ENCODE measurements at regions of chr3 and their contacts with region 1.

Region 1: GRCh38 chr3:11568503-11569155 is 75.1 kb downstream of the VGLL4 start:
- DNase-seq: peak; percentile 97
- H3K4me3 ChIP-seq: peak overlapping the region in 2 of 3 experiments; percentile 3 to 10
- H3K27ac ChIP-seq: peak overlapping the region; percentile 97
- H3K4me1 ChIP-seq: peaks cover 53% of the 10 kb centered on the region
- H3K27me3 ChIP-seq: no peaks in the 10 kb centered on the region
- CTCF ChIP-seq: no peak
- POLR2A ChIP-seq: peak; percentile 74

Region 2: GRCh38 chr3:10992017-10992941 is 576.4 kb before region 1 on chr3 and contains the start of gene SLC6A1:
- CTCF ChIA-PET with region 1: no interaction called
- POLR2A ChIA-PET with region 1: no interaction called
- dilution Hi-C with region 1: no loop called
- intact Hi-C with region 1: no loop called
- DNase-seq: no peak
- H3K4me3 ChIP-seq: no peak within 1 kb of the TSS
- H3K27ac ChIP-seq: no peak within 1 kb of the TSS
- H3K4me1 ChIP-seq: no peaks in the 10 kb centered on the region
- H3K27me3 ChIP-seq: peaks cover 34 to 45% of the 10 kb centered on the region in 2 experiments
- CTCF ChIP-seq: no peak
- POLR2A ChIP-seq: no peak
- total RNA-seq, gene SLC6A1: not detected in 2 replicates

Region 3: DNA sequence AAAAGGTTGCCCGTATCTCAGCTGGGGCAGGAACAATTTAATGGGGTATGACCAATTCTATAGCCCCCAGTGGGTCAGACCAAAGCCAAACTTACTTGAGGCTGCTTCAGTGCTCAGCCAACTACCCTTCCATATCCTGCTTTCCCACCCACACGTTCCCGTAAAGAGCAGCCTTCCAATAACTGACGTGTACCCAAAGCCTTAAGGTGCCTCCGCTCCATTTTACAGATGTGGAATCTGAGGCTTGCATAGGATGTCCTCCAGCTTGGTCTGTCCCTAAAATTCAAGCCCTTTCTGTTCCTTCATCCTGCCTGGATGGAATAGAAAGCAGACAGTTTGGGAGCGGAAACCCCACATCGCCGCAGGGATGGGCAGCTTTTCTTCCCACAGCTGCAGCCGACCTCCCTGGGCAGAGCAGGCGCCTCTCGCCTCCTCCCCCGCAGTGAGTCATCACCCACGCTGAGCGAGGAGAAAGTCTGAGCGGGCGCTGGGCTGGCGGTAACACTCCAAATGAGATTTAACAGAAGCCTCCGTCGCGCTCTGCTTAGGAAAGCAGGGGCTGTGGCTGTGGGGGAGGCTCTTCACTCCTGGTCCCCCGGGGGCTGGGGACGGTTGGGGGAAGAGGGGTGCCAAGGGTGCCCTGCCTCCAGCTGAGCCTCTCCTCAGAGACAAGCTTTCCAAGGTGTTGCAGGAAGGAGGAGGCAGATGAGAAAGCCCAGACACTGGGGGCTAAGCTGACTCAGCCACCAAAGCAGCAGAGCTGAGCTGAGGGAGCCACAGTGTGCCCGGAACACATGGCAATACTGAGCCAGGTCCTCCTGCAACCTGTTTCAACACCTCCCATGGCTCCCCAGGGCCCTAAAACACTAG is 472.1 kb before region 1 on chr3:
- CTCF ChIA-PET with region 1: no interaction called
- POLR2A ChIA-PET with region 1: no interaction called
- dilution Hi-C with region 1: no loop called
- intact Hi-C with region 1: no loop called
- DNase-seq: peak; percentile 77
- H3K4me3 ChIP-seq: peak overlapping the region in 2 of 3 experiments; percentile 3 to 12
- H3K27ac ChIP-seq: no peak overlapping the region
- H3K4me1 ChIP-seq: peaks cover 9% of the 10 kb centered on the region
- H3K27me3 ChIP-seq: no peaks in the 10 kb centered on the region
- CTCF ChIP-seq: no peak
- POLR2A ChIP-seq: no peak

Region 4: DNA sequence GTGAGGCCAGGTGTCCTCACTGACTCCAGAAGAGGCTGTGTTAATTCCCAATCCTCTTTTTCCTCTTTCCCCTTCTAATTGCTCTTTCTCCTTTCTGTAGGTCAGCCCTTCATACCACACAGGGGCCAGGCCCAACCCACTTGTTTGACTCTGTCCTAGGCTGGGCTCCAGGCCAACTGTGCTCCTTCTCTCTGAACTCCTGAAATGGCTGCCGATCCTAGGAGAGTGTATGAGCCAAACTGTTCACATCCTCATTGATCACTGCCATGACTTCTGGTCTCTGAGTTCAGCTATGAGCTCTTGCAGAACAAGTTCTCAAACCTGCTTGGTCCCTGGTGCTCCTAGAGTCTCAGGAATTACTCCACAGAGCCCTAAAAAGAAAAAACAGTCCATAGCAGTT is 70.0 kb before region 1 on chr3:
- CTCF ChIA-PET with region 1: no interaction called
- POLR2A ChIA-PET with region 1: no interaction called
- dilution Hi-C with region 1: no loop called
- intact Hi-C with region 1: loop called (anchors 1 kb)
- DNase-seq: peak; percentile 78
- H3K4me3 ChIP-seq: no peak overlapping the region
- H3K27ac ChIP-seq: peak overlapping the region; percentile 93
- H3K4me1 ChIP-seq: peaks cover 35% of the 10 kb centered on the region
- H3K27me3 ChIP-seq: no peaks in the 10 kb centered on the region
- CTCF ChIP-seq: no peak
- POLR2A ChIP-seq: no peak

Region 5: GRCh38 chr3:11558002-11558401 is 10.6 kb before region 1 on chr3:
- CTCF ChIA-PET with region 1: interaction called, 4 read pairs
- POLR2A ChIA-PET with region 1: interaction called, 3 read pairs
- dilution Hi-C with region 1: no loop called
- intact Hi-C with region 1: loop called (anchors 1 kb)
- DNase-seq: peak; percentile 76
- H3K4me3 ChIP-seq: no peak overlapping the region
- H3K27ac ChIP-seq: peak overlapping the region; percentile 78
- H3K4me1 ChIP-seq: peaks cover 51% of the 10 kb centered on the region
- H3K27me3 ChIP-seq: no peaks in the 10 kb centered on the region
- CTCF ChIP-seq: no peak
- POLR2A ChIP-seq: no peak

Region 6: GRCh38 chr3:11601446-11602238 is 33.0 kb after region 1 on chr3:
- CTCF ChIA-PET with region 1: interaction called, 3 read pairs
- POLR2A ChIA-PET with region 1: interaction called, 5 read pairs
- dilution Hi-C with region 1: no loop called
- intact Hi-C with region 1: loop called (anchors 1 kb)
- DNase-seq: no peak
- H3K4me3 ChIP-seq: no peak overlapping the region
- H3K27ac ChIP-seq: peak overlapping the region; percentile 64
- H3K4me1 ChIP-seq: peaks cover 23% of the 10 kb centered on the region
- H3K27me3 ChIP-seq: no peaks in the 10 kb centered on the region
- CTCF ChIP-seq: no peak
- POLR2A ChIP-seq: no peak

Region 7: DNA sequence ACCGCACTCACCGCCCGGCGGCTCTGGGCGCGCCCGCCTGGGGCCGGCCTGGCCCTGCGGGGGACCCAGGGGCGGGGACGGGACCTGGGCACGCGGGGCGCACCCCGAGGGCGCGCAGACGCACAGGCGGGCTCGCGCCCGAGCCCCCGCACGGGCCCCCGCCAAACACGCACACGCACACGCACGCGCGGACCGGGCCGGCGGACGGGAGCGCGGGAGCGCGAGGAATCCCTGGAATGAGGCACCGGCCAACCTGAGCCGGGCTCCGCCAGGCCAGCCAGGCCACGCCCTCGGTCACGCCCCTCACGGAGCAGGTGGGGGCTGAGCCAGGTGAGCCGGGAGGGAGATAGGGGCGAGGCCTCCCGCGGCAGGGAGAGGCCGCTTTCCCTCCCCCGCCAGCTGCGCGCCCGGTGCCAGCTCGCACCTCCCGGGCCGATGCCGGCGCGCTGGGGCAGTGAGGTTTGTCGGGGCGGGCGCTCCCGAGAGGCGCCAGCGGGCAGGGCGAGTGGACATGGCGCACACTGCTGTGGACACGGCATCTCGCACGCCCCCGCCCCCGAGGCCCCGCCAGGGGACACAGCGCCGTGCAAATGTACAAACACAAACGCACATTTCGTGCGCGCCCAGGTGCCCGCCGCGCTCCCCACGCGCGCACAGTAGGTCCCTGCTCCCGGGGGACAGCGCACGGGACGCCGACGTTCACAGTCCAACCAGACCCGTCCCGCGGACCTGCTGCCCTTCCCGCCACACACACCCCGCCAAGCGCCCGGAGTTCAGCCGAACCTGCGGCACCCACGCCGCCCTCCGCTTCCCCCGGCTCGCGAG is 151.0 kb after region 1 on chr3:
- CTCF ChIA-PET with region 1: no interaction called
- POLR2A ChIA-PET with region 1: no interaction called
- dilution Hi-C with region 1: no loop called
- intact Hi-C with region 1: loop called (anchors 5 kb)
- DNase-seq: peak; percentile 66
- H3K4me3 ChIP-seq: peak overlapping the region; percentile 92 to 96 (median 93)
- H3K27ac ChIP-seq: peak overlapping the region; percentile 76
- H3K4me1 ChIP-seq: peaks cover 21% of the 10 kb centered on the region
- H3K27me3 ChIP-seq: peaks cover under 1 to 9% of the 10 kb centered on the region in 2 experiments
- CTCF ChIP-seq: no peak
- POLR2A ChIP-seq: no peak